Activated naive CD4-positive, alpha-beta T cell treated with anti-CD3 and anti-CD28 coated beads, Interleukin-2, amount 10 ng/mL, durations not matched to agents 7 days and 5 days (primary cell): ENCODE measurements at regions of chr3 and their contacts with region 1.

Region 1: DNA sequence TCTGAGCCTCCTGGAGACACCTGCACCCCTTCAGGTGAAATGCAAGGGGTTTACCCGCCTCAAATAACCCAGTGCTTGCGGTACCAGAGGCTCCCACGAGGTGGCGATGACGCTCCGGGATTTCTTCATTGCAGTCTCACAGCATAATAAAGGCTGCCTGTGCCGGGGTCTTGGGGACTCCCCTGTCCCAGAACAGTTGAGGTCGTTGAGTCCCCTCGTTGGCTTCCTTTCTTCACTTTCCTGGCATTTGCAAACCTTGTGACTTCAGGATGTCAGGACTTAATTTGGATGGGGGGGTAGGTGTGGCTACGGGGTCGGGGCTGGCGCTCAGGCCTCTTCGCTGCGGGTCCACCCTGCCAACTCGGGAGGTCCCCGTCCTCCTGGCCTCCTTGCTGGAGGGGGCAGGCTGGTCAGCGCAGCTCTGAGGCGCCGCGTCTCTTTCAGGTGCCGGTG is 1.3 kb downstream of the GNAT1 start:
- DNase-seq: peak; percentile 90
- H3K4me3 Mint-ChIP-seq: no peak overlapping the region
- H3K27ac Mint-ChIP-seq: peak overlapping the region; percentile 65
- H3K4me1 Mint-ChIP-seq: peaks cover 13% of the 10 kb centered on the region
- H3K27me3 Mint-ChIP-seq: peaks cover 68% of the 10 kb centered on the region

Region 2: GRCh38 chr3:50121416-50122032 is 71.2 kb before region 1 on chr3:
- CTCF ChIA-PET with region 1: interaction called, 30 read pairs
- DNase-seq: peak; percentile 82
- H3K4me3 Mint-ChIP-seq: no peak overlapping the region
- H3K27ac Mint-ChIP-seq: no peak overlapping the region
- H3K4me1 Mint-ChIP-seq: no peaks in the 10 kb centered on the region
- H3K27me3 Mint-ChIP-seq: no peaks in the 10 kb centered on the region

Region 3: DNA sequence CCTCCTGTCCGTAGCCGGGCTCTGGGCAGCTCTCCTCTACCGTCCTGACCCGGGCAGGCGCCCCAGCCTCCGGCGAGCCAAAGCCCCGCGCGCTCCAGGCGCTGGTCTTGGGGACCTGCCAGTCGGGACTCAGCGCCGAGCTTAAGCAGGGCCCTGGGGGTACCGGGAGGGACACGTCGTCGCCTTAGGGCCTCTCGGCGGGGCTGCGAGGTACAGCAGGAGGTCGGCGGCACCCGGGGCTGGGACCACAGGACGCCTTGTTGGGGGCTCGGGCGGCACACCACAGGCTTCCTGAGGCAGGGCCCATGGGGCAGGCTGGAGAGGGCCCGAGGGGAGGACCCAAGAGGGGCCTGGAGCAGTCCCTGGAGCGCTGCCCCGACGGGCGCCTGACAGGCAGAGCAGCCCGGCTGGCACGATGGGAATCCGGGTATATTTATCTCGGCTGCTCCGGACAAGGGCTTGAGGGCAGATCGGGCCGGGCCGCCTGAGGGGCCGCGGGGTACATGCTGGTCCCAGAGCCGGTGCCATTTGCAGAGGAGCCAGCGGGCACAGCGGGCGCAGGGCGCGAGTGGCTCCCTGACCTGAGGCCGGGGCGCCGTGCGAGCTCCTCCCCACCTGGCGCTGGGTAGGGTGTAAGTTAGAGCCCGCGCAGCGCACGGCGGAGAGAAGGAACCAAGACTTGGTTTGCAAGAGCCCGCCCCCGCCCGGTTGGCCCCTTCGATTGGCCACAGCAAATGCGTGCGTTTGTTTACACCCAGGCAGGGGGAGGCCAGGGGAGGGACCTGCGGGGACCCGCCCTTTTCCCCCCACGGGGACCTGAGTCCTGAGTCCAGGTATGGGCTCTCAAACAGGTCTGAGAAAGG is 12.9 kb after region 1 on chr3:
- CTCF ChIA-PET with region 1: interaction called, 40 read pairs
- DNase-seq: peak; percentile 62
- H3K4me3 Mint-ChIP-seq: no peak overlapping the region
- H3K27ac Mint-ChIP-seq: no peak overlapping the region
- H3K4me1 Mint-ChIP-seq: peaks cover 2% of the 10 kb centered on the region
- H3K27me3 Mint-ChIP-seq: peaks cover 92% of the 10 kb centered on the region

Region 4: GRCh38 chr3:50245831-50246516 is 53.3 kb after region 1 on chr3:
- CTCF ChIA-PET with region 1: interaction called, 17 read pairs
- DNase-seq: peak; percentile 95
- H3K4me3 Mint-ChIP-seq: peak overlapping the region; percentile 73
- H3K27ac Mint-ChIP-seq: peak overlapping the region; percentile 93
- H3K4me1 Mint-ChIP-seq: peaks cover 81% of the 10 kb centered on the region
- H3K27me3 Mint-ChIP-seq: no peaks in the 10 kb centered on the region

Region 5: DNA sequence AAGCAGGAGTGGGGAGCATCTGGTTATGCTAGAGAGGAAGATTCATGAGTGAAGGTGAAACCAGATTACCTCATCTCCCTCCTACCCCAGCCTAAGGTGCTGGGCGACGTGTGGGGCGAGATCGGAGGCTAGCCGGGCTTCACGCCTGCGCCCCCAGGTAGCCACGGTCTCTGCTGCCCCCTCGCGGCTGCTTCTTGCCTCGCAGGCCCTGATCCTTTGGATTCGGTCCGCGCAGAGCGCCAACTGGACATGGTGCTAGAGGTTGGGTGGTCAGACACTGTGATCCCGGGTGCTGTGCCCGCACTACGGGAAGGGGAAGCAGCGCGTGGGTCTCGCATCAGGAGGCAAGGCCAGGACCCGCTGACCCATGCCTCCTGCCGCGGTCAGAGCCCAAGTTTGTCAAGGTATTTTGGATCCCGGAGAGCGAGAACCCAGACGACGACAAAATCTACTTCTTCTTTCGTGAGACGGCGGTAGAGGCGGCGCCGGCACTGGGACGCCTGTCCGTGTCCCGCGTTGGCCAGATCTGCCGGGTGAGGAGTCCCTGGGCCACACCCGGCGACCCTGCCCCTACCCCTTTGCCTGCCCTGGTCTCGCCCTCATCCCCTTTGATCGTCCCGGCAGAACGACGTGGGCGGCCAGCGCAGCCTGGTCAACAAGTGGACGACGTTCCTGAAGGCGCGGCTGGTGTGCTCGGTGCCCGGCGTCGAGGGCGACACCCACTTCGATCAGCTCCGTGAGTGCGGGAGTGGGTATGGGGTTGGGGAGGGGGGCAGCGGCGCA is 80.4 kb after region 1 on chr3:
- CTCF ChIA-PET with region 1: interaction called, 24 read pairs
- DNase-seq: peak; percentile 91
- H3K4me3 Mint-ChIP-seq: peak overlapping the region; percentile 57
- H3K27ac Mint-ChIP-seq: peak overlapping the region; percentile 15
- H3K4me1 Mint-ChIP-seq: peaks cover 31% of the 10 kb centered on the region
- H3K27me3 Mint-ChIP-seq: peaks cover 88% of the 10 kb centered on the region